Activated T-helper 2 cell treated with anti-CD3 and anti-CD28 coated beads, Interferon-gamma antibody, Interleukin-2, Interleukin-4, amounts not matched to agents 10 μg/mL and 5 μg/mL and 100 μg/mL, durations not matched to agents 14 hours and 24 hours and 36 hours (primary cell): ENCODE measurements at regions of chr7 and their contacts with region 1.

Region 1: DNA sequence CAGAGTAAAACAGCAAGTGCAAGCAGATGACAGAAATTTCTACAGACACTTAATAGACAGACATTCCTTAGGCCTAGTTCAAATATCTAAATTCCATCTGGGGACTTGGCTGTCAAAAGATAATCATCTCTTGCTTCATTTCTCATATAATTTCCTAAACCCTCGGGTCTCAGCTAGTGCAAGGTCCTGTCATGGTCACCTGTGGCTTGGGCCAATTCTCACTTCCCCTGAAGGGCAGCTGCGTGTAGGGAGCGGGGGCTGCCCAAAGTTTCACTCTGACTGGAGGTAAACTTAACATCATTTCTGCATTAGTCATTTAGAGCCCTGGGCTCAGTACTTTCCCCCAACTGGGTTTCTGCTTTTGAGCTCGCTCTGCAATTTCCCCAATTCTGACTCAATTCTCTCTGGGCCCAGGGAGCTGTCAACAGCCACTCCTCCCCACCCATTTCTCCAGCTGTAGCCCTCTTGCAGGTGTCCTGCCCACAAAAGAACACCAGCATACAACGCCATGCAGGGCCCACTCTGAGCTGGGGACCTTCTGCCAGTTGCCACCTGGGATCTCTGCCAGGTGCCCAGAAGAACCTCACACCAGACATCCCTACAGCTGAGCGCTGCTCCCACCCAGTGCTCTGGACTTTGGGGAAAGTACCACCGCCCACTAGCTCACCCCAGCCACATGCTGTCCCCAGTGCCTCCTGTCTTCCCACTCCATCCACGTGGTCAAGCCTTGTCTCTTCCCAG is 38.0 kb downstream of the VOPP1 start:
- DNase-seq: peak; percentile 75
- H3K4me3 Mint-ChIP-seq: peak overlapping the region; percentile 68
- H3K27ac Mint-ChIP-seq: peak overlapping the region; percentile 96
- H3K4me1 Mint-ChIP-seq: peaks cover 79% of the 10 kb centered on the region
- H3K27me3 Mint-ChIP-seq: no peaks in the 10 kb centered on the region

Region 2: GRCh38 chr7:54758702-54759592 is 775.4 kb before region 1 on chr7 and contains the start of gene SEC61G:
- intact Hi-C with region 1: loop called (anchors 2 kb)
- DNase-seq: peak; percentile 94
- H3K4me3 Mint-ChIP-seq: peak within 1 kb of the TSS; percentile 100
- H3K27ac Mint-ChIP-seq: peak within 1 kb of the TSS; percentile 97
- H3K4me1 Mint-ChIP-seq: peaks cover 32% of the 10 kb centered on the region
- H3K27me3 Mint-ChIP-seq: peaks cover 19% of the 10 kb centered on the region
- total RNA-seq, gene SEC61G: 194 and 200 TPM in 2 replicates

Region 3: GRCh38 chr7:55309040-55309991 is 225.0 kb before region 1 on chr7:
- intact Hi-C with region 1: loop called (anchors 1 kb)
- DNase-seq: peak; percentile 60
- H3K4me3 Mint-ChIP-seq: no peak overlapping the region
- H3K27ac Mint-ChIP-seq: peak overlapping the region; percentile 60
- H3K4me1 Mint-ChIP-seq: peaks cover 31% of the 10 kb centered on the region
- H3K27me3 Mint-ChIP-seq: peaks cover 11% of the 10 kb centered on the region

Region 4: GRCh38 chr7:55432939-55433784 is 101.2 kb before region 1 on chr7:
- intact Hi-C with region 1: no loop called
- DNase-seq: no peak
- H3K4me3 Mint-ChIP-seq: no peak overlapping the region
- H3K27ac Mint-ChIP-seq: no peak overlapping the region
- H3K4me1 Mint-ChIP-seq: peaks cover 4% of the 10 kb centered on the region
- H3K27me3 Mint-ChIP-seq: no peaks in the 10 kb centered on the region

Region 5: GRCh38 chr7:55493408-55493807 is 40.9 kb before region 1 on chr7:
- intact Hi-C with region 1: no loop called
- DNase-seq: no peak
- H3K4me3 Mint-ChIP-seq: no peak overlapping the region
- H3K27ac Mint-ChIP-seq: no peak overlapping the region
- H3K4me1 Mint-ChIP-seq: peaks cover 4% of the 10 kb centered on the region
- H3K27me3 Mint-ChIP-seq: no peaks in the 10 kb centered on the region

Region 6: GRCh38 chr7:55509322-55509721 is 25.0 kb before region 1 on chr7:
- intact Hi-C with region 1: loop called (anchors 2 kb)
- DNase-seq: no peak
- H3K4me3 Mint-ChIP-seq: no peak overlapping the region
- H3K27ac Mint-ChIP-seq: no peak overlapping the region
- H3K4me1 Mint-ChIP-seq: peaks cover 27% of the 10 kb centered on the region
- H3K27me3 Mint-ChIP-seq: no peaks in the 10 kb centered on the region

Region 7: DNA sequence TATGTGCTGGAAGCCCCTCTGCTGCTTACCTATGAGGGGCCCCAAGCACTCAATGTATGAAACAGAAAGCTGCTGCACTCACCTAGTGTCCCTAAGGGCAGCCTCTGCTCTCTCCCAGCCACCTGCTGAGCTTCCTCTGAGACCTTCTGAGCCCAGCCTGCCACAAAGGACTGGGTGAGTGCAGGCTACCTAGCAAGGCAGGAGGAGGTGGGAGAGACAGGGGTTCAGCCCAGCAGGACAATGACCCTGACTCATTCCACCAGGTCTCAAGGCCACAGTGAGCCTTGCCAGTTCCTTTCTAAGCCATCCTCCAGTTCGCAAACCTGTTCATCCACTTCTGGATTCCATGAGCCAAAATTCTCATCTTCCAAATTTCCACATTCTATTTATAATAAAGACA is 21.7 kb after region 1 on chr7:
- intact Hi-C with region 1: loop called (anchors 1 kb)
- DNase-seq: no peak
- H3K4me3 Mint-ChIP-seq: peak overlapping the region; percentile 20
- H3K27ac Mint-ChIP-seq: peak overlapping the region; percentile 61
- H3K4me1 Mint-ChIP-seq: peaks cover 62% of the 10 kb centered on the region
- H3K27me3 Mint-ChIP-seq: no peaks in the 10 kb centered on the region

Region 8: DNA sequence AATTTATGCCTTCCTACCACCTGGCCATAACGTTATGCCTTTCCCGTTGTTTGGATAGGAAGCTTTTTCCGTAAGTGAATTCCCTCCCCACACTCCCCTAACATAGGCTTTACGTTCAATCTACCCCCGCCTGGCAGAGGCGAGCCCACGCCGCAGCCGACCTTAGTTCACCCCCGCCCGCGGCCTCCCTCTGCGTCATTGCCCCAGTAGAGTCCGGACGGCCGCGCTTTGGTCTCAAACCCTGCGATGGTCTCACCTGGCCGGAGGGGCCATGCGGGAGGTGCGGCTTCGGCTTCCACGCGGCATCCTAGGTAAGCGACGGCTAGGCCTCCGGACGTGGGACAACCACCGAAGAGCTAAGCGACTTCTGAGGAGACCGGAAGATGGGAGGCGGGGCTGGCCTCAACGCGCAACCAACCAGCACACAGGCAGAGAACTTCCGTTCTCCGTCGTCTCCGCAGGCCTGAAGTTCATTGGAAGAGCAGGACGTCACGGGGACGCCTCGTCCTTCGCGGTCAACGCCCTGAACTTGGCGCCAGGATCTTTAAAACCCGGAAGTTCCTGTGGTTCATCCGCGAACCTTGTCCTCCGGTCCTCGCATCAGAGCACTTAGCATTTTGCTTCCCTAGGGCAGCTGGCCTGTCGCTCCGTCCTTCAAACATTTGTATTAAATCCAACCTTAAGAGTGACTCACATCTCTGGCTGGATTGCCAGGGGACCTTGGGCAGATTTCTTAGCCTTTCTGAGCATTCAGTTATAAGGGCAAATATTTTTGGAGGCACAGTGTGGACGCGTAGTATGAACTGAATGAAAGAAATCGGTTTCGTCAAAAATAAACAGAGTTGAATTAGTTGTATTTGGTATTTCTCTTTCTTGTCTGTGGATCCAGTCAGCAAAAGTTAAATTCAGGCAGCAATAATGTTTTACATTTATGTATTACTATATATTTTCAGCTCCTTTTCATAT is 572.0 kb after region 1 on chr7 and contains the start of gene CHCHD2:
- intact Hi-C with region 1: loop called (anchors 1 kb)
- DNase-seq: peak; percentile 93
- H3K4me3 Mint-ChIP-seq: peak within 1 kb of the TSS; percentile 99
- H3K27ac Mint-ChIP-seq: peak within 1 kb of the TSS; percentile 99
- H3K4me1 Mint-ChIP-seq: peaks cover 21% of the 10 kb centered on the region
- H3K27me3 Mint-ChIP-seq: no peaks in the 10 kb centered on the region
- total RNA-seq, gene CHCHD2: 660 TPM in 2 replicates